ENCODE measurements at regions of chr1 and their contacts with region 1.

Region 1: GRCh38 chr1:67760030-67760821 is 73.0 kb downstream of the GNG12 start:
- DNase-seq: peak; percentile 59 to 62
- ATAC-seq: peak; percentile 73 to 88; a peak in 5 of 6 replicates
- H3K4me3 ChIP-seq: no peak overlapping the region; the same call in 2 of the 3 replicates
- H3K27ac ChIP-seq: peak overlapping the region; percentile 68 to 75
- H3K4me1 ChIP-seq: peaks cover 50% of the 10 kb centered on the region
- CTCF ChIP-seq: peak; percentile 85
- EP300 ChIP-seq: no peak
- POLR2A ChIP-seq: no peak
- RAD21 ChIP-seq: peak; percentile 78 to 87

Region 2: GRCh38 chr1:67535474-67535873 is 224.8 kb before region 1 on chr1:
- CTCF ChIA-PET with region 1: interaction called, 197 read pairs
- POLR2A ChIA-PET with region 1: no interaction called
- DNase-seq: peak; percentile 55 to 78
- ATAC-seq: peak; percentile 91 to 92
- H3K4me3 ChIP-seq: no peak overlapping the region
- H3K27ac ChIP-seq: peak overlapping the region; percentile 51 to 54; a peak in 4 of 6 replicates
- H3K4me1 ChIP-seq: peaks cover 16% of the 10 kb centered on the region; the same call in 2 of the 3 replicates
- CTCF ChIP-seq: peak; percentile 78
- EP300 ChIP-seq: no peak
- POLR2A ChIP-seq: no peak
- RAD21 ChIP-seq: peak; percentile 78 to 86

Region 3: GRCh38 chr1:67552336-67552759 is 207.9 kb before region 1 on chr1:
- CTCF ChIA-PET with region 1: interaction called, 24 read pairs
- POLR2A ChIA-PET with region 1: no interaction called
- DNase-seq: no peak
- ATAC-seq: peak; percentile 56 to 68; a peak in 5 of 6 replicates
- H3K4me3 ChIP-seq: no peak overlapping the region
- H3K27ac ChIP-seq: no peak overlapping the region
- H3K4me1 ChIP-seq: peaks cover 14% of the 10 kb centered on the region; the same call in 2 of the 3 replicates
- CTCF ChIP-seq: no peak
- EP300 ChIP-seq: no peak
- POLR2A ChIP-seq: no peak
- RAD21 ChIP-seq: no peak

Region 4: DNA sequence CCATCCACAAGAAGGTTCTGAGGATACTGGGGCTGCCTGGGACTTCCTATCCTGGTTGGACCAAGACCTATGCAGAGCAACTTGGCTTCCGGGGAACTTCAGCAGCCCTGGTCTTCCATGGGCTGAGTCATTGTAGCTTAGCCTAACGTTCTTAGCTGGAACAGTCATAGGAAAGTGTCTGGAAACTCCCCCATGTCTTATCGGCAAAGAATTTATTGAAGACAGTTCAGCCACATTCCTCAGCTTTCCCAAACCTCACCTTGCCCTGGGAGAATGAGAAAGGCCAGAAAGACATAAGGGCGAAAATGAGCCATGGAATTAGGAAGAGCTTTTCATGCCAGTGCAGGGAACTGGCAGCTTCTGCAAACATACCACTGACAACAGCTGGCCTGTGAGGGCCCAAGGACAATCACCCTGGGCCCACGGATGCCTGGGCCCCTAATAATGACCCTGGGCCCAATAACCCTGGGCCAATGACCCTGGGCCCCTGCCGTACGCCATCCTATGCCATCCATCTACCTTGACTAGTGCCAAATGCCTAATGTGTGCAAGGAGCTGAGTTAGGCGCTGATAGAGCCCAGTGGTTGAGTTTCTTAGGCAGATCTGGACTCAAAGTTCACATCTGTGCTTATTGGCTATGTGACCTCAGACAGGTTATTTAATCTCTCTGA is 189.6 kb before region 1 on chr1:
- CTCF ChIA-PET with region 1: interaction called, 20 read pairs
- POLR2A ChIA-PET with region 1: no interaction called
- DNase-seq: peak; percentile 56 to 83
- ATAC-seq: peak; percentile 91 to 96
- H3K4me3 ChIP-seq: no peak overlapping the region
- H3K27ac ChIP-seq: peak overlapping the region; percentile 68 to 85
- H3K4me1 ChIP-seq: peaks cover 41% of the 10 kb centered on the region
- CTCF ChIP-seq: no peak
- EP300 ChIP-seq: no peak
- POLR2A ChIP-seq: no peak
- RAD21 ChIP-seq: no peak

Region 5: GRCh38 chr1:67691712-67692111 is 68.5 kb before region 1 on chr1:
- CTCF ChIA-PET with region 1: interaction called, 13 read pairs
- POLR2A ChIA-PET with region 1: interaction called, 15 read pairs
- DNase-seq: no peak
- ATAC-seq: 0 out of 6 replicates have a peak, but pooled peaks of 1 of the 2 experiments have one; percentile 9
- H3K4me3 ChIP-seq: no peak overlapping the region
- H3K27ac ChIP-seq: no peak overlapping the region; a peak in 1 of 6 replicates
- H3K4me1 ChIP-seq: peaks cover 19% of the 10 kb centered on the region
- CTCF ChIP-seq: no peak
- EP300 ChIP-seq: no peak
- POLR2A ChIP-seq: no peak
- RAD21 ChIP-seq: no peak

Region 6: DNA sequence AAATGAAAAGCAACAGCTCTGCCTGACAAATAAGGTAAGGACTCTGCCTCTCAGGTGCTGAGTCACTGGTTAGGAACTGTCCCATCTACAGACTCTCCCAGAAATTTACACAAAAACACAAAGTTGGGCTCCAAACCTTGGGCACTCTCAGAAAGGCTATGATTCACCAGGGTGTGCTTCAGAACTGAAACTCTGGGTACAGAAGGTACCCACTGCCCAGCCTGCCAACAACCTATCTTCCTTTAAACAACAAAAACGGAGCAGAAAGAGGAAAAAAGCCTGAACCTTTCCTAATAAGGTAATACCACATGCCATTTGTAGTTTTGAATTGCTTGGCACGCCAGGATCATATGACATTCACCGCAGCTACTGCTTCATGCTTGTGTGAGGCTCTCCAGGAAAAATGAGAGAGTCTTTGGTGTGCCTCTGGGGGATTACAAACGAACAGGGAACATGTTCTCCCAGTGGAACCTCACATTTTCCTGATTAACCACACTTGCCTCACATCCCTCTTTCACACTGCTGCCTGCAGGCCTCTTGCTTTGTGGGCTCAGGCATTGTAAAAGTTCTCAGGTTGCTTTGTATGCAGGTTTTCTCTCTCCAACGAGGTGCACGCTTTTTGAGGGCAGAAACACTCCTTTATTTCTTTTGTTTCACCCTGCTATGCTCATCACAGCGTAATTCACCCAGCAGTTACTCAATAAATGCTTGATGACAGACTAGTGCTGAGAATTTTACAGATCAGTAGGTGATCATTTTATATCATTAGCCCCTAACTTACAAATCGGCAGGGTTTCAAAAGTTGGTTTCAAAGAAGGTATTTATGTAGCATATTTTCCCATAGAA is 10.2 kb before region 1 on chr1:
- CTCF ChIA-PET with region 1: interaction called, 16 read pairs
- POLR2A ChIA-PET with region 1: interaction called, 3 read pairs
- DNase-seq: peak in 1 of 2 experiments; percentile 65
- ATAC-seq: peak; percentile 79
- H3K4me3 ChIP-seq: peak overlapping the region; percentile 35; the same call in 1 of the 3 replicates
- H3K27ac ChIP-seq: peak overlapping the region; percentile 89 to 94
- H3K4me1 ChIP-seq: peaks cover 79% of the 10 kb centered on the region
- CTCF ChIP-seq: no peak
- EP300 ChIP-seq: no peak
- POLR2A ChIP-seq: no peak
- RAD21 ChIP-seq: no peak

Region 7: DNA sequence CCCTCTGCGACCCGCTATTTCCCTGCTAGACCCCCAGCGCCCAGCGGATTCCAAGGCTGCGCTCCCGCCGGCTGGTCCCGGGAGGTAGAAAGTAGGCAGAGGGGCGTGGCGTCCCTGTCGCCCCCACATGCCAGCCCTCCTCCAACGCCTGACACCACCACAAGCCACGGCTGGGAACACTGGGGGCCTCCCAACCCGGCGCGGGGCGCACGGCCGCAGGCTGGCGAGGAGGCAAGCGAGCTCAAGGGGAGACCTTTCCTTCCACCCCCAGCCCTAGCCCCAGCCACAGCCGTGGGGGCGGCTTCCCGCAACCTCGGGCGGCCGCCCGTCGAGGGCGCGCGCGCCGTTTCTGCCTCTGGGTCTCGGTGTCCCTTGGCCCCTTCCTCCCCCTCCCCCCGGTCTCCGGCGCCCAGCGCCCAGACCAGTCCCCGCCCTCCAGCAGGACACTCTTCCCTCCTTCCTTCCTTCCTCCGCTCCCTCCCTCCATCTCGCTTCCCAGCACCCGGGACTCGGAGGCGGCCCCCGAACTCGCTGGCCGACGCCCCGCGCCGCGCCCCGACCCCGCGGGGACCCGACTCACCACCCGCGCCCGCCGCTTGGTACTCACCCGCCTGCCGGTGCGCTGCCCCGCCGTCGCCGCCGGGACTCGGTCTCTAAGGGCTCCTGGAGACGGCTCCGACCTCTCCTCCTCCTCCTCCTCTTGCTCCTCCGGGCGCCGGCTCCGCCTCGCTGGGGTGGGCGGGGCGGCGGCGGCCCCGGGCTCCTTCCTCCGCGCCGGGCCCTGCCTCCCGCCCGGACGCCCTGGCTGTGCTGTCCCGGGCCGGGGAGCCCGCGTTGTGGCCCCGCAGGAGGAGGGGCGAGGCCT is 72.7 kb after region 1 on chr1 and contains the start of gene GNG12:
- CTCF ChIA-PET with region 1: interaction called, 27 read pairs
- POLR2A ChIA-PET with region 1: no interaction called
- DNase-seq: peak; percentile 63 to 78
- ATAC-seq: peak; percentile 89 to 92
- H3K4me3 ChIP-seq: peak within 1 kb of the TSS; percentile 86
- H3K27ac ChIP-seq: peak within 1 kb of the TSS; percentile 97 to 99
- H3K4me1 ChIP-seq: peaks cover 42% of the 10 kb centered on the region
- CTCF ChIP-seq: no peak
- EP300 ChIP-seq: no peak
- POLR2A ChIP-seq: peak; percentile 16; the same call in 1 of the 2 replicates
- RAD21 ChIP-seq: peak in 1 of 2 experiments; percentile 27; a peak in 2 of 5 replicates
- polyA plus RNA-seq, gene GNG12: 104 and 132 TPM in 2 replicates

Region 8: DNA sequence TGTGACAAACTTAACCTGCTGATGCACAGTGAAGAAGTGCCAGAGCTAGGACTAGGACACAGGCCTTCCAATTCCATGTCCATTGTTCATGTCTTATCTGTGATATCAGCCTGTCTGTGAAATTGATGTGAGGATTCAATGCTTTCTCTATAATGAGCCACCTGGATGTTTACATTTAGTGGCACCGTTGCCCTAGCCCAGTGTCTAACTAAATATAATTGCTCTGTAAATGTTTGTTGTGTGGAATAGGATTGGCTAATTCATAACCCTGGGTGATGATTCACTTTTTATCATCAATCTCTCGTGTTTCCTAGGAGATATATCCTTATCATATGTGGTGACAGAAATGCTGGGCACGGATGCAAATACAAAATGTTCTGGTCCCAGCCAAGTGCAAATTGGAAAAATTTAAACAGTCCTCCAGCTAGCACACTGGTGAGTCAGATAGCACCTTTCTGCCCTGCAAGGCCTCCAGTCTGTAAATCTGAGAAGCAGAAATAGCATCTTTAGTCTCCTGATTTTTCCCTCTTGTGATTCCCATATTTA is 119.9 kb after region 1 on chr1:
- CTCF ChIA-PET with region 1: no interaction called
- POLR2A ChIA-PET with region 1: no interaction called
- DNase-seq: peak; percentile 42 to 83
- ATAC-seq: peak; percentile 90 to 91
- H3K4me3 ChIP-seq: no peak overlapping the region
- H3K27ac ChIP-seq: peak overlapping the region; percentile 83 to 88
- H3K4me1 ChIP-seq: peaks cover 39% of the 10 kb centered on the region
- CTCF ChIP-seq: no peak
- EP300 ChIP-seq: peak; percentile 40 to 51; a peak in 2 of 5 replicates
- POLR2A ChIP-seq: no peak
- RAD21 ChIP-seq: peak in 1 of 2 experiments; percentile 26; a peak in 1 of 5 replicates